ENCODE measurements at regions of chr12 and their contacts with region 1.

Region 1: GRCh38 chr12:110371408-110372055 is 32.0 kb downstream of the ANAPC7 start:
- DNase-seq: peak; percentile 78
- ATAC-seq: peak; percentile 96
- H3K4me3 Mint-ChIP-seq: no peak overlapping the region
- H3K27ac Mint-ChIP-seq: peak overlapping the region; percentile 78
- H3K4me1 Mint-ChIP-seq: peaks cover 46% of the 10 kb centered on the region
- H3K27me3 Mint-ChIP-seq: no peaks in the 10 kb centered on the region
- CTCF ChIP-seq: no peak

Region 2: DNA sequence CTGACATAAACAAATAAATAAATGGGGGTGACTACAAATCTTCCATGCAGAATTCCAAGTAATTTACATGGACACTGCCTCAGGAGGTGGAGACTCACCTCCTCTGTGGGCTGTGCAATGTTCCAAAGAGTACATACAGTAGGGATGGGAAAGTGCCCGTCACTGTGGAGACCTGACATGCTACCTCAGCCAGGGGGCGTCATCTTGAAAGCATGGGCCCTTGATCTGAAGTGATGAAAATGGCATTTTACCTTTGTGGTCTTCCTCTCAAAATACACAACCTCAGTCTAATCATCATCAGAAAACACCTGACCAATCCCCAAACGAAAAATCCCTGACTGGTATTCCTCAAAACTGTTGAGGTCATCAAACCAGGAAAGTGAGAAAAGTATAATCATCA is 16.5 kb before region 1 on chr12:
- CTCF ChIA-PET with region 1: interaction called, 3 read pairs
- POLR2A ChIA-PET with region 1: interaction called, 4 read pairs
- intact Hi-C with region 1: loop called (anchors 1 kb)
- DNase-seq: no peak
- ATAC-seq: peak; percentile 54
- H3K4me3 Mint-ChIP-seq: no peak overlapping the region
- H3K27ac Mint-ChIP-seq: no peak overlapping the region
- H3K4me1 Mint-ChIP-seq: peaks cover 14% of the 10 kb centered on the region
- H3K27me3 Mint-ChIP-seq: no peaks in the 10 kb centered on the region
- CTCF ChIP-seq: no peak

Region 3: DNA sequence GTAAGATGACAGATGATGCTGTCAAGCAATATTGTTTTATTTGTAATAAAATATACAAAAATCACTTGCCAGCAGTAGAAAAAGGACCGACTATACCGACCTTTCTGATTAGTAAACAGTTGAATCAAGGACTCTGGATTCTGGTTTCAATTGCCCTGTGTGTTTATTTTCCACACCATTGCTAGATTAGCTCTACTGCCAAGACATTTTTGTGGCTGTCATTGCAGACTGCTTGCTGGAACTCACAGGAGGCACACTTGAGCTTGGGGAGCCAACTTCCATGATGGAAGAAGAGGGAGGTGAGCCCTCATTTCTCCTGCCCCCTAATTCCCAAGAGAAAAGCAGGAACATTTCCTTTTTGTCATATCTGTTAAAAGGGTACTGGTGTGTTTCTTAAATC is 1521.8 kb after region 1 on chr12:
- CTCF ChIA-PET with region 1: no interaction called
- POLR2A ChIA-PET with region 1: interaction called, 11 read pairs
- intact Hi-C with region 1: no loop called
- DNase-seq: no peak
- ATAC-seq: no peak
- H3K4me3 Mint-ChIP-seq: no peak overlapping the region
- H3K27ac Mint-ChIP-seq: no peak overlapping the region
- H3K4me1 Mint-ChIP-seq: no peaks in the 10 kb centered on the region
- H3K27me3 Mint-ChIP-seq: no peaks in the 10 kb centered on the region
- CTCF ChIP-seq: no peak